Endothelial cell of umbilical vein (primary cell): ENCODE measurements at regions of chr21 and their contacts with region 1.

Region 1: DNA sequence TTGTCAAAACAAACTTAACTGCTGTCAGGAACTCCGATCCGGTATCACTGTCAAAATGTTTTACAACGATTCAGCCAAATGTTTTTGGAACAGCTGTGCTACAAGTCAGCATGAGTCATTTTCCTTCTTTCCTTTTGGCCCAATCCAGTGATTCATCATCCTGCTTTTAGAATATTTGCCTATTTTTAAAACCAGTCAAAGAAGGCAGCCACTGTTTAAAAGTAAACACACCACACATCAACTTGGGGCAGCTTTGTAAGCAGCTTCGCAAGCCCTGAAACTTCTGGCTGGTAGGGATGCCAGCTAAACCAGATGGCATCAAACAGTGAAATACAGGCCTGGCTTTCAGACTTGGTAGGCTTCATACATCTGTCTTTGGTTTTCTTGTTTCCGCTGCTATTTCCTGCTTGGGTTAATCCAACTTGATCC is 14.9 kb downstream of the MAP3K7CL start:
- DNase-seq: peak; percentile 96
- H3K4me3 ChIP-seq: peak overlapping the region in 1 of 3 experiments; percentile 41
- H3K27ac ChIP-seq: peak overlapping the region; percentile 97
- H3K4me1 ChIP-seq: peaks cover 35% of the 10 kb centered on the region
- H3K27me3 ChIP-seq: no peaks in the 10 kb centered on the region
- CTCF ChIP-seq: no peak
- POLR2A ChIP-seq: no peak

Region 2: DNA sequence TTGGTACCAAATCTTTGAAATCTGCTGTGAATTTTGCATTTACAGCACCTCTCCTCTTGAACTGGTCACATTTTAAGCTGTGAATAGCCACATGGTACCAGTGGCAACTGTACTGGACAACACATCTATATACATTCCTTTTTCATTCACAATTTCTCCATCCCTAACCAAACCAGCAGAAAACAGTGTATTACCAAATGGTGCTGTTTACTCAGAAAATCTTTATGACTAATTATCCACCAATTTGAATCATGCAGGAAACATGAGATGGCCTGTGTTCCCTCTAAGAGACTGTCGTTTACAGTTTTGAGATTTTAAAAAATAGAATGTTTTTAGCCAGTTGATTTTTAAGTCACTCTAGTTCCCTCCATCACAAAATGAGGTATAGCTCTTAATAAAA is 54.3 kb before region 1 on chr21:
- CTCF ChIA-PET with region 1: interaction called, 9 read pairs
- POLR2A ChIA-PET with region 1: no interaction called
- dilution Hi-C with region 1: no loop called
- intact Hi-C with region 1: loop called (anchors 2 kb)
- DNase-seq: peak; percentile 63
- H3K4me3 ChIP-seq: no peak overlapping the region
- H3K27ac ChIP-seq: peak overlapping the region; percentile 65
- H3K4me1 ChIP-seq: peaks cover 22% of the 10 kb centered on the region
- H3K27me3 ChIP-seq: no peaks in the 10 kb centered on the region
- CTCF ChIP-seq: no peak
- POLR2A ChIP-seq: no peak

Region 3: DNA sequence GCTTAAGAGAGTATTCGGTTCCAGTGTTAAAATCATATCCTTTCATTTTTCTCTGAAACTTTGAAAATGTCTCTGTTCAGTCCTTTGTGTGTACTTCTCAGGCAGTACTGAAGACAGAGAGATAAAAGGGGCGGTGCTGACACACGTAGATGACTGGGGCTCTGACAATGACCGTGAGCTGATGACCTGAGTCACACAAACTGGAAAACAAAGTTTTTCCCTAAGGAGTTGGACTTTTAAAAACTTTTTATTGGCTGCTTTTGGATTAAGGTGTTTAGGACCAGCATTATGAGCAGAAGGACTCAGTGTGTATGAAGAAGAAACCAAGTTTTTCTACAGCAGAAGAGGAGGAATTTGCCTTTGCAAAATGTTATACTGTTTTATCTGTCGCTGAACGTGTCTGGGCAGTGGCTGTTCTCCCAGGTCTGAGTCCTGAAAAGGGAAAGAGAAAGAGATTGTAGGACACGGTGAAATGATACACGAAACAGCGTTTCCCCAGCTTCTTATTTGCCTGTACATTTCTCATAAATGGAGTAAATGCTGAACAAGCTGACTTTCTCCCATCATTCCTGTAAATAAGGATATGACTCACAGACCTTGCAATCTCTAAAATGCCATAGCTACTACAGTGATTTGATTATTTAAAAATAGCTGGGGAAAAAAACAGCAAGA is 36.6 kb after region 1 on chr21:
- CTCF ChIA-PET with region 1: no interaction called
- POLR2A ChIA-PET with region 1: no interaction called
- dilution Hi-C with region 1: no loop called
- intact Hi-C with region 1: loop called (anchors 2 kb)
- DNase-seq: peak; percentile 90
- H3K4me3 ChIP-seq: peak overlapping the region; percentile 11 to 73 (median 32)
- H3K27ac ChIP-seq: peak overlapping the region; percentile 99
- H3K4me1 ChIP-seq: peaks cover 31% of the 10 kb centered on the region
- H3K27me3 ChIP-seq: no peaks in the 10 kb centered on the region
- CTCF ChIP-seq: no peak
- POLR2A ChIP-seq: peak; percentile 40

Region 4: DNA sequence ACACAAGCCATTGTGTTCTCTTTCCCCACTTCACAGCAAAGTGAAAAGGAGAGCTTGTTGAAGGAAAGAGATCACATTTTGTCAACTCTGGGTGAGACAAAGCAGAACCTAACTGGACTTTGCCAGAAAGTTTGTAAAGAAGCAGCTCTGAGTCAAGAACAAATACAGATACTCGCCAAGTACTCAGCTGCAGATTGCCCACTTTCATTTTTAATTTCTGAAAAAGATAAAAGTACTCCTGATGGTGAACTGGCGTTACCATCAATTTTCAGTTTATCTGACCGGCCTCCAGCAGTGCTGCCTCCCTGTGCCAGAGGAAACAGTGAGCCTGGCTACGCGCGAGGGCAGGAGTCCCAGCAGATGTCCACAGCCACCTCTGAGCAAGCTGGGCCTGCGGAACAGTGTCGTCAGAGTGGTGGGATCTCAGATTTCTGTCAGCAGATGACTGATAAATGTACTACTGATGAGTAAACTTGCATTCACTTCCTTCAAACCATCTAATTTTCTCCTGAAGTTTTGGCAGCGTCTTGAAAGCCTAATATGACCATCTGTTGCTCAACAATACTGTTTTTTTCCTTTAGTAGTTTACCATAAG is 197.1 kb after region 1 on chr21:
- CTCF ChIA-PET with region 1: no interaction called
- POLR2A ChIA-PET with region 1: no interaction called
- dilution Hi-C with region 1: no loop called
- intact Hi-C with region 1: loop called (anchors 1 kb)
- DNase-seq: peak; percentile 91
- H3K4me3 ChIP-seq: no peak overlapping the region
- H3K27ac ChIP-seq: peak overlapping the region; percentile 82
- H3K4me1 ChIP-seq: peaks cover 29% of the 10 kb centered on the region
- H3K27me3 ChIP-seq: no peaks in the 10 kb centered on the region
- CTCF ChIP-seq: no peak
- POLR2A ChIP-seq: peak; percentile 33